ENCODE measurements at regions of chr2 and their contacts with region 1.

Region 1: DNA sequence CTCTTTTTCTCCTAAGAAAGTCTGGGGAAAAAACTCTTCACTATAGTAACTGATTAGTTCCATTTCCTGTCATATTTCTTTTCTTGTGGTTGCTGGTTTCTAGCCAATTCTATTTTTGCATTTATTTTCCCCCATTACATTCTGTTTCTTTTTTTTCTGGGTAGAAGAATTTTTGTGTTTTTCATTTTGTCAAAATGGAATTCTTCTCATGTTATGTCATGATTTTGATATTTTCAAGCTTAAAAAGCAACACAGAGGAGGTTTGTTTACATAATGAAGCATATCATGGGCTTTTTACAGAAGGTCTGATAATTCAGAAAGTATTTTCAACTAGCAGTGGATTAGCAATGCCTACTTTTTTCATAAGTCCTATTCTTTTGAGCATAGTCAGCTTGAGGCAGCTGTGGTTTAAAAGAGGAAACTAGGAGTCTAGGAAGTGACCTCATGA is 102.0 kb downstream of the MAP2 start:
- DNase-seq: peak; percentile 91
- H3K4me3 ChIP-seq: peak overlapping the region in 1 of 3 experiments; percentile 72
- H3K27ac ChIP-seq: peak overlapping the region; percentile 99
- H3K4me1 ChIP-seq: peaks cover 37% of the 10 kb centered on the region
- H3K27me3 ChIP-seq: no peaks in the 10 kb centered on the region
- CTCF ChIP-seq: no peak
- POLR2A ChIP-seq: no peak

Region 2: DNA sequence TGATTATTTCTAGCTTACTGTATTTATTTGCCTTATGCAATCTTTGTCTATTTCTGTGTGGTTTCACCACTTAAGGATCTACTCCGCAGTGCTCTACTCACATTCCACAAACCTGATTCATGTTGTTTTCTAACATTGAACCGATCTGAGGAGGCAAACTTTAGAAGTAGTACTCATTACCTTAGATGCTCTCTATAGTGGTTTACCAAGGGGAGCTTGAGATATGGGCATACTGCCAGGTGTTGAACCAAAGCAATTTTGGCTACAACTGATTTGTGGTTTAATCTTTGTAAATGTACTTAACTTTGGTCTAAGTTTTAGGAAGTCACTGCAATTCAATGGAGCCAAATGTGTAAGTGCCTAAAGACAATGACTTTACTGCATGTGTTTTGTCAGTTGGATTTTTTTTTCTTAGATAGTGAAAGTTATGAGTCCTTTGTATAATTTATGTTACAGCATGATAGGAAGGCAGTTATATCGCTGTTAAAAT is 51.9 kb before region 1 on chr2:
- CTCF ChIA-PET with region 1: no interaction called
- POLR2A ChIA-PET with region 1: no interaction called
- dilution Hi-C with region 1: no loop called
- intact Hi-C with region 1: loop called (anchors 1 kb)
- DNase-seq: peak; percentile 80
- H3K4me3 ChIP-seq: no peak overlapping the region
- H3K27ac ChIP-seq: peak overlapping the region; percentile 54
- H3K4me1 ChIP-seq: peaks cover 42% of the 10 kb centered on the region
- H3K27me3 ChIP-seq: no peaks in the 10 kb centered on the region
- CTCF ChIP-seq: no peak
- POLR2A ChIP-seq: no peak

Region 3: DNA sequence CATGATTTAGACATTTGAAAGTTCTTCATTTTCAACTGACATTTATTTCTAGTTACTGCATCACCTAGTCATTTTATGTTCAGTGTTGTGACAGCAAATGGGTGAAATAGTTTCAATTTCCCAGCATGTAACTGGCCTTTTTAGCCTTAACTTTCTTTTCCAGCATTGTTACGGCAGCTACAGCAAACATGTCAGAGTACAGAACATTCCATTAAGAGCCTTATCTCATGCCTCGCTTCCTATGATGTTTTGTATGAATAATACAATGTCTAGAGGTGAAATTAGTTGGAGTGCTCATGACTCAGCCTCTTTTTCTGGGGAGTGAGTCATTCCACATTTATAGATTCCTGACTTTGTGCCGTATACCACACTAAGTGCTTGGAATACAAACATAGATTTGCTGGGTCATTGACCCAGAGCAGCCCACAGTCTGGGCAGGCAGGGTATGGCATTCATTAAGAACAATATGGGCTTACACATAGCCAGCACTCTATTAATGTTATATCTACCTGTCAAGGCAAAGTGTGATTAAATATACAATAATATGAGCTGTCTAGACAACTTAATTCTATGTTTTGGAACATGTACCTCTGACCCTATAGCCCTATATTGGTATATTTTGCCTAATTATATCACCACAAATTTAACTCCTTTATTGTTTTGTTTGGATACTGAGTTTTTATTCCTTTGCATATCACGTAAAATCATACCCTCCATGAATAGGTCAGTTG is 29.8 kb before region 1 on chr2:
- CTCF ChIA-PET with region 1: interaction called, 10 read pairs
- POLR2A ChIA-PET with region 1: no interaction called
- dilution Hi-C with region 1: no loop called
- intact Hi-C with region 1: loop called (anchors 1 kb)
- DNase-seq: peak; percentile 99
- H3K4me3 ChIP-seq: peak overlapping the region in 1 of 3 experiments; percentile 52
- H3K27ac ChIP-seq: peak overlapping the region; percentile 100
- H3K4me1 ChIP-seq: peaks cover 30% of the 10 kb centered on the region
- H3K27me3 ChIP-seq: no peaks in the 10 kb centered on the region
- CTCF ChIP-seq: no peak
- POLR2A ChIP-seq: peak; percentile 46

Region 4: GRCh38 chr2:209512971-209513370 is 12.9 kb before region 1 on chr2:
- CTCF ChIA-PET with region 1: interaction called, 13 read pairs
- POLR2A ChIA-PET with region 1: no interaction called
- dilution Hi-C with region 1: no loop called
- intact Hi-C with region 1: loop called (anchors 2 kb)
- DNase-seq: no peak
- H3K4me3 ChIP-seq: no peak overlapping the region
- H3K27ac ChIP-seq: no peak overlapping the region
- H3K4me1 ChIP-seq: peaks cover 6% of the 10 kb centered on the region
- H3K27me3 ChIP-seq: no peaks in the 10 kb centered on the region
- CTCF ChIP-seq: no peak
- POLR2A ChIP-seq: no peak

Region 5: DNA sequence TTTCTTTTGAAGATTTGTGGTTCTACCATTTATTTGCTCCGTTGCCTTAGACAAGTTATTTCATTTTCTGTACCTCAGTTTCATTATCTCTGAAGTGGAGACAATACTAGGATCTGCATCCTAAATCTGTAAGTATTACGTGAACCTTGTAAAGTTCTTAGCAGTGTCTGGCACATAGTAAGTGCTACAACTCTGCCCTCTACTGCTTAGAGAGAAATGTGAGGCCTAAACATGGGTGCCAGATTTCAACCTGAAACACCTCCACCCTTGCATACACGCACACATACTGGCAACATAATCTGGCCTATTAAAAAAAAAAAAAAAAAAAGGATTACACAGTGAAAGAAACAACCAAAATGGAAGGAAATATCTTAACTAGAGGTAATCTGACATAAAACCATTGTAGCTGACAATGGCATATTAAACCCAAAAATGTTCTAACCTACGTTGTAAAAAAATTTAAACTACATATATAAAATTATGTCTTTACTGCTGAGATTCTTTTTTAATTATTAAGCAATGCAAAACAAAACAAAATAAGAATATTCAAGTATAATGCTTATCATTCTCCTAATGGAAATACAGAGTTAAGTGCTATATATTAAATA is 30.6 kb after region 1 on chr2:
- CTCF ChIA-PET with region 1: interaction called, 4 read pairs
- POLR2A ChIA-PET with region 1: no interaction called
- dilution Hi-C with region 1: no loop called
- intact Hi-C with region 1: loop called (anchors 1 kb)
- DNase-seq: peak; percentile 70
- H3K4me3 ChIP-seq: no peak overlapping the region
- H3K27ac ChIP-seq: no peak overlapping the region
- H3K4me1 ChIP-seq: no peaks in the 10 kb centered on the region
- H3K27me3 ChIP-seq: no peaks in the 10 kb centered on the region
- CTCF ChIP-seq: peak; percentile 48 to 57
- POLR2A ChIP-seq: no peak

Region 6: DNA sequence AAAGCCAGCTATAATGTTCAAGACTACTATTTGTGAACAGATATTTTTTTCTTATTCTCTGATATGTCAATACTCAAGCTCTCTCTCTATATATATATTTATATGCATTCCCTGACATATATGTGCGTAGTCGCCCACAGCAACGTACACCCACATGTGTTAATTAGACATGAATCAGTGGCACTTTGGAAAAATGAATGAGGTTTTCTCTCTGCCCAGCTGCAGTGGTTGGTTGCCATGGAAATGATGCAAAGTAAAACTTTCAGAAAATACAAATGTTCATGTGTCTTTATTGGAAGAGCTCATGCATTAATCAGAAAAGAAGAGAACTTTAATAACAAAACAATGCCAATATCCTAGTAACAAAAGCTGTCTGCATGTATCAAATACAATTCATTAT is 280.5 kb after region 1 on chr2:
- CTCF ChIA-PET with region 1: no interaction called
- POLR2A ChIA-PET with region 1: no interaction called
- dilution Hi-C with region 1: no loop called
- intact Hi-C with region 1: no loop called
- DNase-seq: no peak
- H3K4me3 ChIP-seq: no peak overlapping the region
- H3K27ac ChIP-seq: no peak overlapping the region
- H3K4me1 ChIP-seq: no peaks in the 10 kb centered on the region
- H3K27me3 ChIP-seq: no peaks in the 10 kb centered on the region
- CTCF ChIP-seq: no peak
- POLR2A ChIP-seq: no peak

Region 7: GRCh38 chr2:210376694-210377093 is 850.8 kb after region 1 on chr2:
- CTCF ChIA-PET with region 1: no interaction called
- POLR2A ChIA-PET with region 1: no interaction called
- dilution Hi-C with region 1: no loop called
- intact Hi-C with region 1: no loop called
- DNase-seq: no peak
- H3K4me3 ChIP-seq: no peak overlapping the region
- H3K27ac ChIP-seq: no peak overlapping the region
- H3K4me1 ChIP-seq: no peaks in the 10 kb centered on the region
- H3K27me3 ChIP-seq: no peaks in the 10 kb centered on the region
- CTCF ChIP-seq: no peak
- POLR2A ChIP-seq: no peak

Measured in endothelial cell of umbilical vein (primary cell).